CD8-positive, alpha-beta memory T cell (primary cell): ENCODE measurements at regions of chr1 and their contacts with region 1.

Region 1: DNA sequence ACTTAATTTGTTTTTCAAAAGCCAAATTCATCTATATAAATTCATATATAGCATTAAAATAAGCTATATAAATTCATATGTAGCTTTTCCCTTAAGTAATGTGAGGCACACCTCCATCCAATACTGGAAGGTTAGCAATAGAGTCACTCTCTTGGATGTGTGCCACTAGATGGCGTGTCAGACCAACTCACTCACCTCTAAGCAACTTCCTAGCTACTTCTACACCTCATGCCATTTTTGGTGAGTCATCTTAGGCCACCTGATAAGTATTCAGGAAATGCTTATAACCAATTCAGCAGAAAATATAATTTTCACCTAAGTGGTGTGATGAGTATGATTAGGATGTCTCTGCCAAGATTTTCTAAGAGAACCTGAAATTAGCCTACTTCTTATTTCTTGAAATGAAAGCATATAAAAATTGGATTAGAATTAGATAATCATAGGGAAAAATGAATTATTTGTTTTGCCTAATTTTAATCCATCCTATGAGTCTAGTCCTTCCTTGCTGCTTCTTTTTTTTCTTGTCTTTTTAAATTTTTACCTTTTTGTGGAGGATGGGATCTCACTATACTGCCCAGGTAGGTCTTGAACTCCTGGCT is 34.4 kb upstream of the TADA1 start:
- DNase-seq: peak; percentile 51 to 83 (median 66)
- H3K4me3 ChIP-seq: no peak overlapping the region
- H3K4me3 Mint-ChIP-seq: no peak overlapping the region
- H3K27ac ChIP-seq: no peak overlapping the region
- H3K27ac Mint-ChIP-seq: no peak overlapping the region
- H3K4me1 ChIP-seq: no peaks in the 10 kb centered on the region
- H3K4me1 Mint-ChIP-seq: peaks cover 3 to 9% (median 8%) of the 10 kb centered on the region in 3 donors
- H3K27me3 ChIP-seq: no peaks in the 10 kb centered on the region
- H3K27me3 Mint-ChIP-seq: peaks cover 1 to 19% of the 10 kb centered on the region in 2 donors

Region 2: DNA sequence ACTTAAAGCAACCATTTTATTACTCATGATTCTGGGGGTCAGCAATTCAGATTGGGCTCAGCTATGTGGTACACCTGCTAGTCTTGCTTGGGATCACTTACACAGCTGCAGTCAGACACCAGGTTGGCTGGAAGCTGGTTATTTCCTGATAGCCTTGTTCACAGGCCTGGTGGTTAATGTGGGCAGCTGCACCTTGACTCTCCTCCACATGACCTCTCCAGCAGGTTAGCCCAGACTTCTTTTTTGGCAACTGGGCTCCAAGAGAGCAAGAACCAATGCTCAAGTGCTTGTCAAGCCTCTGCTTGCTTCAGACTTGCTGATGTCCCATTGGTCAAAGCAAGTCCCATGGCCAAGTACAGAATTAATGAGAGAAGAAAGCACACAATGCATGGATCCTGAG is 83.1 kb before region 1 on chr1:
- CTCF ChIA-PET with region 1: no interaction called
- POLR2A ChIA-PET with region 1: no interaction called
- DNase-seq: no peak
- H3K4me3 ChIP-seq: no peak overlapping the region
- H3K4me3 Mint-ChIP-seq: no peak overlapping the region
- H3K27ac ChIP-seq: no peak overlapping the region
- H3K27ac Mint-ChIP-seq: no peak overlapping the region
- H3K4me1 ChIP-seq: no peaks in the 10 kb centered on the region
- H3K4me1 Mint-ChIP-seq: no peaks in the 10 kb centered on the region
- H3K27me3 ChIP-seq: no peaks in the 10 kb centered on the region
- H3K27me3 Mint-ChIP-seq: peaks cover 21 to 48% of the 10 kb centered on the region in 2 donors

Region 3: DNA sequence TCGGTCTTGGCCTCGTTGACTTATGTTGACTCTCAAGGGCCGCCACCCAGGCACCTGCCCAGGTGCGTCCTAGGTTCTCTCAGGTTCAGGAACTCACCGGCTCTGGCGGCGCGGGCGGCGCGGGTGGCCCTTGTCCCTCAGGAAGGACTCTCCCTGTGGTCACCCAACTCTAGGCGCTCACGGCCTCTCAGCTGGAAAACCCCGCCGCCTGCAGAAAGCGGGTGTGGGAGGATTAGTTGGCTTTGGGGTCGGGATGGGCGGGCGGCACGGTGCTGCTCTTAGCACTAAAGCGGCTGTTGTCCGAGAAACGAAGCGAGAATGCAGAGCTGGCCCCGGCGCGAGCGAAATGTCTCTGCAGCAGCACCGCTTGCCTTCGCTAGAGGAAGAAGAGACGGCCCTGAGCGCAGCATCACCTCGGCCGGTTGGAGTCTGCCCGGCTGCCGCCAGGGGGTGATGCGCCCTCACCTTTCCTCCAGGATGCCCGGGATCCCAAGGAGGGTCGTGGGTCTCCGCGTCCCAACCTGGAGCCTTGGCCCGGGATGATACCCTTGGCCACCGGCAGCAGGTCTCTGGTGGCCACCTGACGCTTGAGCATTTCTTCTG is 26.4 kb before region 1 on chr1:
- CTCF ChIA-PET with region 1: interaction called, 13 read pairs
- POLR2A ChIA-PET with region 1: no interaction called
- DNase-seq: peak in 3 of 5 donors; percentile 4 to 48 (median 13)
- H3K4me3 ChIP-seq: no peak overlapping the region
- H3K4me3 Mint-ChIP-seq: peak overlapping the region in 3 of 7 donors; percentile 24 to 31 (median 28)
- H3K27ac ChIP-seq: no peak overlapping the region
- H3K27ac Mint-ChIP-seq: peak overlapping the region in 1 of 8 donors; percentile 28
- H3K4me1 ChIP-seq: peaks cover 11% of the 10 kb centered on the region
- H3K4me1 Mint-ChIP-seq: peaks cover 13 to 23% (median 22%) of the 10 kb centered on the region in 3 donors
- H3K27me3 ChIP-seq: peaks cover 17% of the 10 kb centered on the region
- H3K27me3 Mint-ChIP-seq: peaks cover 17 to 41% of the 10 kb centered on the region in 2 donors

Region 4: DNA sequence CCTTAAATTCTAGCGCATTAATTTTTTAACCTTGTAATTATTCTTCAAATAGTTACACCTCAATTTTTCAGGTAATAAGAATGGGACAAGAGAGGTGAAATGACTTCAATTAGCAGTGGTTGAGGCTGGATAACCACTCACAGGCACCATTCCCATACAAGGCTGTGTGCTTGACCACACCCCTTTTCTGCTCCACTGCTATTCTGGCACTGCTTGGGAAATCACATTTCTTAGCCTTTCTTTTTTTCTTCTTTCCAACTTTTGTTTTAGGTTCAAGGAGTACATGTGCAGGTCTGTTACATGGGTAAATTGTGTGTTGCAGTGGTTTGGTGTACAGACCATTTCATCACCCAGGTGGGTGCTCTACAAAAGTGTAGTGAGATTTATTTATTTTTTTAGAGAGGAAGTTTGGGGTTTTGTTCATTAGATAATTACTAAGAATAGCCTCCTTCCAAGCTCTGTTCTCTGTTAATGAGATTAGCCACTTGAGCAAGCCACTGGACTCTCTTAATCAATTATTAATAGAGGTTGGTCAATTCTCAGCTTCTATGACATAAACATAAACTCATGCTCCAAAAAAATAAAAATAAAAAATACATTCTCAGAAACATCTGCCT is 50.5 kb after region 1 on chr1:
- CTCF ChIA-PET with region 1: no interaction called
- POLR2A ChIA-PET with region 1: no interaction called
- DNase-seq: no peak
- H3K4me3 ChIP-seq: no peak overlapping the region
- H3K4me3 Mint-ChIP-seq: no peak overlapping the region
- H3K27ac ChIP-seq: no peak overlapping the region
- H3K27ac Mint-ChIP-seq: no peak overlapping the region
- H3K4me1 ChIP-seq: no peaks in the 10 kb centered on the region
- H3K4me1 Mint-ChIP-seq: no peaks in the 10 kb centered on the region
- H3K27me3 ChIP-seq: no peaks in the 10 kb centered on the region
- H3K27me3 Mint-ChIP-seq: peaks cover 7 to 40% of the 10 kb centered on the region in 2 donors

Region 5: GRCh38 chr1:167043752-167044488 is 133.4 kb after region 1 on chr1:
- CTCF ChIA-PET with region 1: interaction called, 10 read pairs
- POLR2A ChIA-PET with region 1: interaction called, 6 read pairs
- DNase-seq: peak; percentile 42 to 80 (median 60)
- H3K4me3 ChIP-seq: peak overlapping the region; percentile 58
- H3K4me3 Mint-ChIP-seq: peak overlapping the region; percentile 70 to 94 (median 90)
- H3K27ac ChIP-seq: no peak overlapping the region
- H3K27ac Mint-ChIP-seq: peak overlapping the region in 7 of 8 donors; percentile 48 to 91 (median 85)
- H3K4me1 ChIP-seq: no peaks in the 10 kb centered on the region
- H3K4me1 Mint-ChIP-seq: peaks cover 11 to 19% (median 17%) of the 10 kb centered on the region in 3 donors
- H3K27me3 ChIP-seq: no peaks in the 10 kb centered on the region
- H3K27me3 Mint-ChIP-seq: peaks cover 1 to 34% of the 10 kb centered on the region in 2 donors

Region 6: GRCh38 chr1:167126811-167127210 is 216.3 kb after region 1 on chr1:
- CTCF ChIA-PET with region 1: interaction called, 16 read pairs
- POLR2A ChIA-PET with region 1: interaction called, 5 read pairs
- DNase-seq: no peak
- H3K4me3 ChIP-seq: no peak overlapping the region
- H3K4me3 Mint-ChIP-seq: no peak overlapping the region
- H3K27ac ChIP-seq: no peak overlapping the region
- H3K27ac Mint-ChIP-seq: no peak overlapping the region
- H3K4me1 ChIP-seq: peaks cover under 1% of the 10 kb centered on the region
- H3K4me1 Mint-ChIP-seq: peaks cover 0 to 4% (median 0%) of the 10 kb centered on the region in 3 donors
- H3K27me3 ChIP-seq: peaks cover 7% of the 10 kb centered on the region
- H3K27me3 Mint-ChIP-seq: peaks cover 7 to 55% of the 10 kb centered on the region in 2 donors